A549 (cell line): ENCODE measurements at regions of chr2 and their contacts with region 1.

Region 1: GRCh38 chr2:208112969-208113368 is 11.4 kb downstream of the CRYGD start:
- DNase-seq: no peak
- ATAC-seq: peak in 1 of 2 experiments; percentile 44; a peak in 2 of 6 replicates
- H3K4me3 ChIP-seq: no peak overlapping the region
- H3K27ac ChIP-seq: no peak overlapping the region
- H3K4me1 ChIP-seq: no peaks in the 10 kb centered on the region
- CTCF ChIP-seq: no peak
- EP300 ChIP-seq: no peak
- POLR2A ChIP-seq: no peak
- RAD21 ChIP-seq: no peak

Region 2: DNA sequence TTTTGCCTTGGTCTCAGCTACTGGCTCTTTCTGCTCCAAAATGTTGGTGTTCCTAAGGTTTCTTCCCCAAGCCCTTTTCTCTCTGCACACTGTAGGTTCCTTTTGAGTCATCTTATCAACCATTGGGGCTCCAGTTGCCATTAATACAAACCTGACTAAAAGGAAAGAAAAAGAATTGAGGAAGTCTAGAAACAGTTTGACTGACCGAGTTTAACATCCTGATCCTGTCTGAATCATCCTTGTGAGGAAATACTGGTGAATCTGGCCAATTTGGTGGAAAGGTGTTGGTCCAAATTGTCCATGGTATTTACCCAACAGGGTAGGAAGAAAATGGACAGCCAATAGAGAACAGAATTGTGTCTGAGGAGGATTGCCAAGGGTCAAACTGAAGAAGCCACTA is 26.9 kb before region 1 on chr2:
- CTCF ChIA-PET with region 1: no interaction called
- POLR2A ChIA-PET with region 1: no interaction called
- DNase-seq: no peak
- ATAC-seq: no peak
- H3K4me3 ChIP-seq: no peak overlapping the region
- H3K27ac ChIP-seq: no peak overlapping the region
- H3K4me1 ChIP-seq: no peaks in the 10 kb centered on the region
- CTCF ChIP-seq: no peak
- EP300 ChIP-seq: no peak
- POLR2A ChIP-seq: no peak
- RAD21 ChIP-seq: no peak

Region 3: GRCh38 chr2:208101716-208102631 is 11.0 kb before region 1 on chr2:
- CTCF ChIA-PET with region 1: interaction called, 12 read pairs
- POLR2A ChIA-PET with region 1: no interaction called
- DNase-seq: peak in 1 of 2 experiments; percentile 45
- ATAC-seq: peak; percentile 84 to 87; a peak in 5 of 6 replicates
- H3K4me3 ChIP-seq: no peak overlapping the region
- H3K27ac ChIP-seq: no peak overlapping the region
- H3K4me1 ChIP-seq: peaks cover 5% of the 10 kb centered on the region; the same call in 1 of the 3 replicates
- CTCF ChIP-seq: peak; percentile 63
- EP300 ChIP-seq: no peak
- POLR2A ChIP-seq: no peak
- RAD21 ChIP-seq: peak; percentile 66 to 72

Region 4: DNA sequence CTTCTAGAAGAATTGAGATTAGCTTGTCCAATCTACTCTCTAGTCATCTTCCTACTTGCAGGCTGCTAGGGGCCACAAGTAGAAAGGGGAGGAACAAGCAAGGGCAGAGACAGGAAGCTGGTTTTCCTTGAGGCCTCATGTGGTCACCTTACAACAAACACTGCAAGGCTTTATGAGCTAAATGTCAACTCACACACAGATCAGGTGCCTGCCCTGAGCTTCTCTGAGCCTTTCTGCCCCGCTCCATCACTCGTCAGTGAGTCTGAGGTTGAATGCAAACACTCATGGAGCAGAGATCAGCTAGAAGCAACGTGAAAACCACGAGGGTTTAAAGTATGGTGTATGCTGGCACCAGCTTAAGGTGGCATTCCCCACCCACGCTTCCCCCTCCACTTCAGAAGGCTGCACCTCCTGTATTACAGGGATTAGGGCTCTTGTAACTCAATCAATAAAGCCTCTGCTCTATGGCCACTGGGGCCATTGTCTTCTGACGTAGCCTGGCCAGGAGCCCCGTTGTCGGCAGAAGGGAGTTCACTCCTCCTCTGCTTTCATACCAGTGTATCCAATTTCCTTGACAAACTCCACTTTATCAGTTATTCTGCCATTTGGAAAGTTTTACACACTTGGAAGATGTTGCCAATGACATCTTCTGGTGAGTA is 22.1 kb after region 1 on chr2:
- CTCF ChIA-PET with region 1: no interaction called
- POLR2A ChIA-PET with region 1: no interaction called
- DNase-seq: no peak
- ATAC-seq: no peak
- H3K4me3 ChIP-seq: no peak overlapping the region
- H3K27ac ChIP-seq: no peak overlapping the region
- H3K4me1 ChIP-seq: no peaks in the 10 kb centered on the region
- CTCF ChIP-seq: no peak
- EP300 ChIP-seq: no peak
- POLR2A ChIP-seq: no peak
- RAD21 ChIP-seq: no peak